ENCODE measurements at regions of chr19 and their contacts with region 1.

Region 1: DNA sequence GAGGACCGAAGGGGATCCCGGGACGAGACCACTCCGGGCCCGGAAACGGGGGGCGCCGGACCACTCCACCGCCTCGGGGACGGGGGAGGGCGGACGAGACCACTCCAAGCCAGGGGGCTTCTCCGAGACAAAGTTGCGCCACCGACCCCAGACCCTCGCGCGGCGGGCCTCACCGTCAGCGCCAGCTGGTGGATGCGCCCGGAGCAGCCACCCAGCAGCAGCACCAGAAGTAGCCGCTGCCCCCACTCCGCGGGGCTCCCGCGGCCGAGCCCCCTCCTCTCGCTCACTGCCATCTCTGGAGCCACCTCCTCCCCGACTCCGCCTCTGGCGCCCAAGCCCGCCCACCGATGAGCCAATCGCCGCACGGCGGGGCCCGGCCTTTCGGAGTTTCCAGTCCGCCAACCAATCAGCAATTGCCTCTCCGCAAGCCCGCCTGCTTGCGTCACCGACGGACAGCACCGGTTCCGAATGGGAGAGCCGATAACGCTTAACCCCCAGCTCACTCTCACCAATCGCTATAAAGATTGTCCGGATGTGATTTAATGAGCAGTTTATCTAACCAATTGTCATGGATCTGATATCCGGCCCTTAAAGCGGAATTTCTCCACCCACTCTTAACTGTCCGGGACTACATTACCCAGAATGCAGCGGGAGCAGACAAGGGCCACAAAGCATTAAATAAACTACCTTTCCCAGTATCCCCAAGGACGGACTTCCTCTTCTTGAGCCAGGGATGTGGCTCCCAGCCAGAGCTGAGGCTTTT is at the start of gene GPR108:
- DNase-seq: peak; percentile 100
- ATAC-seq: peak; percentile 81
- H3K4me3 Mint-ChIP-seq: peak within 1 kb of the TSS; percentile 84
- H3K27ac Mint-ChIP-seq: peak within 1 kb of the TSS; percentile 99
- H3K4me1 Mint-ChIP-seq: peaks cover 36% of the 10 kb centered on the region
- H3K27me3 Mint-ChIP-seq: no peaks in the 10 kb centered on the region
- total RNA-seq, gene GPR108: 77.2 to 100 TPM

Region 2: GRCh38 chr19:6516659-6517291 is 220.7 kb before region 1 on chr19:
- CTCF ChIA-PET with region 1: interaction called, 46 read pairs
- DNase-seq: peak; percentile 95
- ATAC-seq: peak; percentile 81
- H3K4me3 Mint-ChIP-seq: peak overlapping the region; percentile 89
- H3K27ac Mint-ChIP-seq: peak overlapping the region; percentile 96
- H3K4me1 Mint-ChIP-seq: peaks cover 41% of the 10 kb centered on the region
- H3K27me3 Mint-ChIP-seq: no peaks in the 10 kb centered on the region

Region 3: GRCh38 chr19:6639439-6639838 is 98.0 kb before region 1 on chr19:
- CTCF ChIA-PET with region 1: interaction called, 61 read pairs
- DNase-seq: peak; percentile 84
- ATAC-seq: peak; percentile 87
- H3K4me3 Mint-ChIP-seq: no peak overlapping the region
- H3K27ac Mint-ChIP-seq: peak overlapping the region; percentile 38
- H3K4me1 Mint-ChIP-seq: peaks cover 47% of the 10 kb centered on the region
- H3K27me3 Mint-ChIP-seq: no peaks in the 10 kb centered on the region

Region 4: DNA sequence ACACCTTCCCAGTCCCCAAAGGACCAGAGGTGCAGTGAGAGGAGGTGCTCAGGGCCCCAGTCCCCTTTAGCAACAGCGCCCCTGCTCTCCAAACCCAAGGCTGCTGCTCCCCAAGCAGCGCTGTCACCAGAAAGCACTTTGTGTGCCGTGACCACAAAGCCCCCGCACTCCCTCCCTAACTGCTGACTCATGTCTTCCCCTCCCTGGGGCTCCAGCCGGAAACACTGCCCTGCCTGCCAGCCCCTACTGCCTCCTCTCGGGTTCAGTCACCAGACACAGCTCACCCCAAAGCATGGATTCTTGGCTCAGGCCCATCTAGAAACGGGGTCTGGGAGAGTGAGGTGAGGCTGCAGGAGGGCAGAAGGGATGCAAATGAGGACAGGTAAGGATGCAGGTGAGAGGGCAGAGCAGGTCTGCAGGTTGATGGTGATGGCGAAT is 62.6 kb before region 1 on chr19:
- CTCF ChIA-PET with region 1: interaction called, 13 read pairs
- DNase-seq: peak; percentile 98
- ATAC-seq: peak; percentile 77
- H3K4me3 Mint-ChIP-seq: peak overlapping the region; percentile 73
- H3K27ac Mint-ChIP-seq: peak overlapping the region; percentile 90
- H3K4me1 Mint-ChIP-seq: peaks cover 69% of the 10 kb centered on the region
- H3K27me3 Mint-ChIP-seq: peaks cover 9% of the 10 kb centered on the region

Region 5: DNA sequence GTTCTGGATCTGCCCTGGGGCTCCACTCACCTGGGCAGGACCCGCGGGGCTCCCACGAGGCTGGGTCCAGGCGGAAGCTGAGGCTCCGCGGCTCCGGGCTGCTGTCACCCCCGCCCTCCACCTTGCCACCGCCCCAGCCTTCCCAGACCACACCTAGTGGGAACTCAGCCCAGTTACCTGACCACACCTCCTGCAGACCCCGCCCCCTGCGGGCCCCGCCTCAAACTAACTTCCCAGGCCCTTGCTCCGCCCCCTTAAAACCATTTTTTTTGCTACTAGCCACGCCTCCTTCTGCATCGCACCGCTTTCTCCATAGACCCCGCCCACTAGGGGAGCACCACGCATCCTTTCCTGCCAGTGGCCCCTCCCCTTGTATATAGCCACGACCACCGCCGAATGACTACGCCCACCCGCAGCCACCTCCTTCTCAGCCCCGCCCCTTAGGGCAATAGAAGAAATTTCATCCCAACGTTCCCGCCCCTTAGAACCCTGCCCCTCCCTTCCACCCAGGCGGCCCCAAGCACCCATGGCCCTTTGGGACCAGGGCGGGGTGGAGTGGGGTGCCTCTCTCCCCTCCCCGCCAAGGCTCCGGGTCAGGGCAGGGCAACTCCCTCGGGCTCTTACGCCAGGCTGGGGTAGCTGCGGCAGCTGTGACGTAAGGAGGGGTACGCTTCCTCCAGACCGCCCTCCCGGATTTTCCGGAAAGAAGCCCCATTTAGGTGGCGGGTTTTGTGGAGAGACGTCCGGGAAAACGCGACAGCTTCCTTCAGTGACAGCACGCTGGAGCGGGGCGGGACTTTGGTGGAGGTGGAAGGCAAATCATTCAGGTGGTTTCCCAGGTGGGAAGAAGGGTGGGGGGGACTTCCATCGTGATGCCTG is 30.1 kb after region 1 on chr19 and contains the start of gene SH2D3A:
- CTCF ChIA-PET with region 1: interaction called, 23 read pairs
- DNase-seq: peak; percentile 98
- ATAC-seq: peak; percentile 77
- H3K4me3 Mint-ChIP-seq: peak within 1 kb of the TSS; percentile 91
- H3K27ac Mint-ChIP-seq: peak within 1 kb of the TSS; percentile 93
- H3K4me1 Mint-ChIP-seq: peaks cover 38% of the 10 kb centered on the region
- H3K27me3 Mint-ChIP-seq: no peaks in the 10 kb centered on the region
- total RNA-seq, gene SH2D3A: 13.8 to 22.3 TPM

Region 6: DNA sequence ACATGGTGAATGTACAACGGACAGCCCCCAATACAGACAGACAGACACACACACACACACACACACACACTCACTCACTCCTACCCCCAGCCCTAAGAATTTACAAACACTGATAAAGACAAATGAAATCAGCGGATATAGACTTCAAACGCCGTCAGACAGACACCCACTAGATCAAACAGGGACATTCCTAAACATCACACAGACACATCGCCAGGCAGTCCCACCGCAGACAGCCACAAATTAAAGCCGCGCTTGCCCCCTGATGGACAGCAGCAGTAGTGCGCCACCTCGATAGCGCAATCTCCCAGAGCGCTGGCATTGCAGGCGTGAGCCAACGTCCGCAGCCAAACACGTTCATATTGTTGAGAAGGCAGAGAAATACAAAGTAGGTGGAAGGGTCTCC is 125.2 kb after region 1 on chr19:
- CTCF ChIA-PET with region 1: interaction called, 127 read pairs
- DNase-seq: peak; percentile 94
- ATAC-seq: peak; percentile 88
- H3K4me3 Mint-ChIP-seq: peak overlapping the region; percentile 72
- H3K27ac Mint-ChIP-seq: peak overlapping the region; percentile 82
- H3K4me1 Mint-ChIP-seq: peaks cover 12% of the 10 kb centered on the region
- H3K27me3 Mint-ChIP-seq: no peaks in the 10 kb centered on the region

Measured in activated CD8-positive, alpha-beta memory T cell treated with anti-CD3 and anti-CD28 coated beads, Interleukin-2, amount 10 ng/mL, durations not matched to agents 7 days and 5 days (primary cell).